ENCODE measurements at regions of chr6 and their contacts with region 1.

Region 1: GRCh38 chr6:31597006-31597405 is 4.2 kb upstream of the NCR3 start:
- DNase-seq: no peak
- ATAC-seq: peak; percentile 56
- H3K4me3 ChIP-seq: no peak overlapping the region
- H3K27ac ChIP-seq: no peak overlapping the region
- H3K4me1 ChIP-seq: no peaks in the 10 kb centered on the region
- H3K27me3 ChIP-seq: no peaks in the 10 kb centered on the region

Region 2: DNA sequence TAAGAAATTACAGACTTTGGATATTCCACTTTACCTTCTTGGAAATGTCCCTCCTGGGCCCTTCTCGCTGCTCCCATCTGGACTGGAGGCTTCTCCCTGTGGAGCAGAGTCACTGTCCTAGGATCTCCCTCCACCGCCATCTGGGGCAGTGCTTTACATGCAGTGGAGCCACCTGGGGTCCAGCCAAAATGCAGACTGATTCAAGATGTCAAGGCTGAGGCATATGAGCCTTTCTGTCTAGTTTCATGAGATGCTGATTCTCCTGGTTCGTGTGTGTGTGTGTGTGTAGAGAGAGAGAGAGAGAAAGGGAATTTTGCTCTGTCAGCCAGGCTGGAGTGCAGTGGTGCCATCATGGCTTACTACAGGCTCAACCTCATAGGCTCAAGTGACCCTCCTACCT is 178.8 kb before region 1 on chr6:
- intact Hi-C with region 1: no loop called
- DNase-seq: no peak
- ATAC-seq: no peak
- H3K4me3 ChIP-seq: no peak overlapping the region
- H3K27ac ChIP-seq: no peak overlapping the region
- H3K4me1 ChIP-seq: no peaks in the 10 kb centered on the region
- H3K27me3 ChIP-seq: no peaks in the 10 kb centered on the region

Region 3: GRCh38 chr6:31493875-31494694 is 102.9 kb before region 1 on chr6:
- intact Hi-C with region 1: loop called in 1 of 2 experiments (anchors 5 kb)
- DNase-seq: peak; percentile 90 to 95
- ATAC-seq: peak; percentile 88
- H3K4me3 ChIP-seq: peak overlapping the region; percentile 53 to 57
- H3K27ac ChIP-seq: peak overlapping the region in 1 of 2 donors; percentile 28
- H3K4me1 ChIP-seq: peaks cover 0 to 1% of the 10 kb centered on the region in 2 donors
- H3K27me3 ChIP-seq: no peaks in the 10 kb centered on the region

Region 4: GRCh38 chr6:31546962-31547726 is 49.9 kb before region 1 on chr6 and contains the start of gene NFKBIL1:
- intact Hi-C with region 1: loop called (anchors 1 kb)
- DNase-seq: peak; percentile 97
- ATAC-seq: peak; percentile 97
- H3K4me3 ChIP-seq: peak within 1 kb of the TSS; percentile 14 to 59
- H3K27ac ChIP-seq: peak within 1 kb of the TSS in 1 of 2 donors; percentile 31
- H3K4me1 ChIP-seq: no peaks in the 10 kb centered on the region
- H3K27me3 ChIP-seq: no peaks in the 10 kb centered on the region
- total RNA-seq, gene NFKBIL1: 16.0 to 19.8 TPM

Region 5: DNA sequence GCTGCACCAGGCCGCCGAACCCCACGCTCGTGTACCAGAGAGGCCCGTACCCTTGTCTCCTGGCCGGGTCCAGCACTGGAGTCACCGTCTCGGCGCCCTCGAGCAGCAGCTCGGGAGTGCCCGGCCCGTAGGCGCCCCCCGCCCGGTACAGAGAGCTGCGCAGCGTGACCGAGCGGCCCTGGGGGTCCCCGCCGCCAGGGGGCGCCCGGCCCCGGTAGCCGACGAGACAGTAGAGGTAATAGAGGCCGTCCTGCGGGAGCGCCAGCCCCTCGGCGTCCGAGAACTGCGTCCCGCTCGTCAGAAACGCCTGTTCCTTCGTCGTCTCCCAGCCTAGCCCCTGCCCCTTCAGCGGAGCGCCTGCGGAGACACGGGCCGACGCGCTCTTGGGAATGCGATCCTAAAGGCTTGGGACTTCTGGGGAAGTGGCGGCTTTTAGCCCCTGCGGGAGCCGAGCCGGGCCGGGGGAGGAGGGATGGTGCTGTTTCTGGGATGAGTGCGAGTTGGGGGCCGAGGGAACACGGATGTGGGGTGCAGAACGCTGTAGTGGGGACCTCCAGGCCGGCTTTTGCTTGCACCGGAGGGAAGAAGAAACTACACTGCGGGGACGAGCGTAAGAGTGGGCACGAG is 16.1 kb before region 1 on chr6:
- intact Hi-C with region 1: loop called in 1 of 2 experiments (anchors 2 kb)
- DNase-seq: peak; percentile 92 to 97
- ATAC-seq: peak; percentile 96
- H3K4me3 ChIP-seq: peak overlapping the region; percentile 20 to 32
- H3K27ac ChIP-seq: peak overlapping the region in 1 of 2 donors; percentile 7
- H3K4me1 ChIP-seq: no peaks in the 10 kb centered on the region
- H3K27me3 ChIP-seq: no peaks in the 10 kb centered on the region

Measured in aorta (tissue), 5 donors.